ENCODE measurements at regions of chr1 and their contacts with region 1.

Region 1: DNA sequence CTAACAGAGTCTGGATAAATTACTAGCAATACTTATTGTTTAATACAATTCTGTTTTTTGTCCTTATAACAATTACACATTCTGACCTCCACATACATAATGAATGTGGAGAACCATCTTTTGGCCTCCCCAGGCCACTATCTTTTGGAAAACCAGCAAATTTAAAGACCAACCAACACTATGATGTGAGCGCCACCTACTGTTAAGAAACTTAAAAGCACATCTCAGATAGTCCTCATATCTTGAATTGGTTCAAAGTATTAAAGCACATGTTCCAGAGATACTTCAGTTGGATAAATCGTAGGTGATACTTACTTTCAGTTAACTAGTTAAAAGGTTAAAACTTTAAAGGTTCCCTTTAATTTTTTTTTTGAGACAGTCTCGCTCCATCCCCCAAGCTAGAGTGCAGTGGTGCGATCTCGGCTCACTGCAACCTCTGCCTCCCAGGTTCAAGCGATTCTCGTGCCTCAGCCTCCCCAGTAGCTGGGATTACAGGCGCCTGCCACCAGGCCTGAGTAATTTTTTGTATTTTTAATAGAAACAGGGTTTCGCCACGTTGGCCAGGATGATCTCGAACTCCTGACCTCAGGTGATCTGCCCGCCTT is 29.3 kb upstream of the USP1 start:
- DNase-seq: no peak
- H3K4me3 Mint-ChIP-seq: no peak overlapping the region
- H3K27ac Mint-ChIP-seq: no peak overlapping the region
- H3K4me1 Mint-ChIP-seq: no peaks in the 10 kb centered on the region
- H3K27me3 Mint-ChIP-seq: peaks cover 3% of the 10 kb centered on the region

Region 2: DNA sequence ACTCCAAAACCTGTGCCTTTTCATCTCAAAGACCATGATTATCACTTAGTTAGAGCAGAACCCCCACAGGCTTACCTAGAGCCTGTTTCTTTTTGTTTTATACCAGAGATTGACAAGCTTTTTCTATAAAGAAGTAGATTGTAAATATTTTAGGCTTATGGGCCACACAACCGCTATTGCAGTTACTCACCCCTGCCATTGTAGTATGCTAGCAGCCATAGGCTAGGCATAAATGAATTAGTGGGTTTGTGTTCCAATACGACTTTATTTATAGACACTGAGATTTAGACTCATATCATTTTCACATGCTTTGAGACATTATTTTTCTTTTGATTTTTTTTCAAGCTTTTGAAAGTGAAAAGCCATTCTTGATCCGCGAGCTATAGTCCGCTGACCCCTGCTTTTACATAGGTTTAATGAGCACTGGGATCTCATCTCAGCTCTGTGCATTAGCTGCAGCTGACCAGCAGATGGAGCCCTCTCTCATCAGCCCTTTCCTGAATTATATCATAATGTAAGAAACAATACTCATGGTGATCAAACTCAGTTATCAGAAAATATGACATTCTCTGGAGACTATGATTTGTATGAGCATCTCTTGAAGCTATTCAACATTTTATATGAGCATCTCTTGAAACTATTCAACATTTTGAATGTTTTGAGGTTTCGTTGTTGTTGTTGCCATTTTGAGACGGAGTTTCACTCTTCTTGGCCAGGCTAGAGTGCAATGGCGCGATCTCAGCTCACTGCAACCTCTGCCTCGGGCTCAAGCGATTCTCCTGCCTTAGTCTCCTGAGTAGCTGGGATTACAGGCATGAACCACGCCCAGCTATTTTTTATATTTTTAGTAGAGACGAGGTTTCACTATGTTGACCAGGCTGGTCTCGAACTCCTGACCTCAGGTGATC is 324.8 kb before region 1 on chr1:
- intact Hi-C with region 1: loop called (anchors 1 kb)
- DNase-seq: no peak
- H3K4me3 Mint-ChIP-seq: no peak overlapping the region
- H3K27ac Mint-ChIP-seq: no peak overlapping the region
- H3K4me1 Mint-ChIP-seq: no peaks in the 10 kb centered on the region
- H3K27me3 Mint-ChIP-seq: no peaks in the 10 kb centered on the region

Region 3: GRCh38 chr1:62175568-62176179 is 231.8 kb before region 1 on chr1:
- intact Hi-C with region 1: loop called (anchors 1 kb)
- DNase-seq: peak; percentile 3
- H3K4me3 Mint-ChIP-seq: no peak overlapping the region
- H3K27ac Mint-ChIP-seq: no peak overlapping the region
- H3K4me1 Mint-ChIP-seq: no peaks in the 10 kb centered on the region
- H3K27me3 Mint-ChIP-seq: peaks cover 3% of the 10 kb centered on the region

Region 4: DNA sequence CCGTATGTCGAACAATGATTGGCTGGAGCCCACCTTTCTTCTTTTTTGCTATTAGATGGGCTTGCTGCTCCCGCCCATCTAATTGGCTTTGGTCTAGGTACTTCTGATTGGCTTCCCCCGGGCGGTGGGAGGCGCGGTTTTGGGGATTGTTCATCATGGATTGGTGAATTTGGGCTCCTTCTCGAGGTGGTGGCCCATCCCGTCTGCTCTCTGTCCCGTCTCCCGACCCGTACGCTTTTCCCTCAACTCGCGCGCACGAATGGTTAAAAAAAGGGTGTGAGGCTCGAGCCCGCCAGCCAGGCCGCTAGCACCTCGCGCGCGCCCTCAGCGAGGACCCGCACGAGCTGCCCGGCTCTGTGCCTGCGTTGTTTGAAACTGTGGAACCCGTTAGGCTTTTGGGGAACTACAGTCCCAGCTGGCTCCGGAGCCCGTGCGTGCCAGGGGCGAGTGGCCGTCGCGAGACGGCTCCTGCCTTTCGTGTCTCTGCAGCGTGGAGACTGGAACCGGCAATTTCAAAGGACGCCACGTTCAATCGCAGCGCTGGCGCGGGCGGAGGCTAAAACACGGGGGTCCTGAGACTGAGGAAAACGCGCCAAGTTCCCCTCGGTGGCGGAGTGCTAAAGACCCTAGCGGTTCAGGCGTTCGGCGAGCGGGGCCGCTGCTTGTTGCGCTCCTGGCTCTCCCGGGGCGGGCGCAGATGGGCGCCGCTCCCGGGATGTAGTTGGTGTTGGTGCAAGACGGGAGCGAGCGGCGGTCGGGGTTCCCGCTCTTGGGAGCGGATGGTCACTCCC is 29.2 kb after region 1 on chr1 and contains the start of gene USP1:
- intact Hi-C with region 1: no loop called
- DNase-seq: peak; percentile 98
- H3K4me3 Mint-ChIP-seq: peak within 1 kb of the TSS; percentile 94
- H3K27ac Mint-ChIP-seq: peak within 1 kb of the TSS; percentile 99
- H3K4me1 Mint-ChIP-seq: peaks cover 41% of the 10 kb centered on the region
- H3K27me3 Mint-ChIP-seq: peaks cover 8% of the 10 kb centered on the region
- total RNA-seq, gene USP1: 77.8 and 78.7 TPM in 2 replicates

Measured in activated T-helper 1 cell treated with anti-CD3 and anti-CD28 coated beads, Interleukin-12 subunit alpha, Interleukin-12 subunit beta, Interleukin-2, Interleukin-4 antibody, amounts not matched to agents 30 ng/mL and 10 ng/mL and 1 ng/mL, durations not matched to agents 14 hours and 24 hours and 36 hours (primary cell).